ENCODE measurements at regions of chr10 and their contacts with region 1.

Region 1: DNA sequence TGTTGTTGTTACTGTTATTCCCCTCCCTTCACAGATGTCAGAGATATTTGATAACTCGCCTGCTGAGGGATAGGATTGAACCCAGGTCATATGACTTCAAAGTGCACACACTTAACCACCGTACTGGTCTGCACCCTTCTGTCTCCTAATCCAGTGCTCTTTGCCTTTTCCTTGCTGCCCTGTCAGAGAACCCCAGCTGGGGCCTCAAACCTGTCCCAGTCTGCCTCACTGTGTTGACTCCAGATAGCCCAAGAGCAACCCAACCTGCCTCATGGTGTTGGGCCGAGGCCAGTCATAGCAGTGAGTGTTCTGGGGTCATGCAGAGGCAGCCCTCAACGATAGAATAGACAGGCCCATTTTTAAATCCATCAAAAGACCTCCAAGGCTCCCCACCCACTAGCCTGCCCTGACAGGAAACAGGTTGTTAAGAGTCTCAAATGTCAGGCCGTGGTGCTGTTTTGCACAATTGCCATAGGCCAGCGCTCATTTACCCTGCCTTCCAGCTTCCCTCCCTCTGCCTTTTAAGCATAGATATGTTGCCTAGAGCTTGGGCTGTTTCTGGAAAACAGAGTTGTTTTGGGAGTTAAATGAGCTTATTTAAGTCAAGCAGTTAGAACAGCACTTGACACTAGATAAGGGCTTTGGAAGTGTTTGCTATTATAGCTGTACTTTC is 37.0 kb upstream of the PDCD4 start:
- DNase-seq: no peak
- H3K4me3 ChIP-seq: no peak overlapping the region
- H3K27ac ChIP-seq: no peak overlapping the region
- H3K4me1 ChIP-seq: peaks cover 0 to 10% (median 2%) of the 10 kb centered on the region in 4 experiments; a peak in 4 of 7 replicates
- H3K27me3 ChIP-seq: no peaks in the 10 kb centered on the region
- CTCF ChIP-seq: no peak
- EP300 ChIP-seq: no peak
- POLR2A ChIP-seq: no peak
- RAD21 ChIP-seq: no peak

Region 2: GRCh38 chr10:110845743-110846700 is 11.3 kb after region 1 on chr10:
- CTCF ChIA-PET with region 1: interaction called, 10 read pairs
- POLR2A ChIA-PET with region 1: interaction called, 3 read pairs
- DNase-seq: no peak
- H3K4me3 ChIP-seq: no peak overlapping the region
- H3K27ac ChIP-seq: no peak overlapping the region
- H3K4me1 ChIP-seq: no peaks in the 10 kb centered on the region
- H3K27me3 ChIP-seq: no peaks in the 10 kb centered on the region
- CTCF ChIP-seq: no peak
- EP300 ChIP-seq: no peak
- POLR2A ChIP-seq: no peak
- RAD21 ChIP-seq: no peak